WTC11 (cell line): ENCODE measurements at regions of chr2 and their contacts with region 1.

Region 1: GRCh38 chr2:75241696-75242095 is 42.4 kb upstream of the TACR1 start:
- DNase-seq: no peak
- ATAC-seq: peak; percentile 74
- H3K4me3 Mint-ChIP-seq: no peak overlapping the region
- H3K27ac Mint-ChIP-seq: no peak overlapping the region
- H3K4me1 Mint-ChIP-seq: no peaks in the 10 kb centered on the region
- H3K27me3 Mint-ChIP-seq: no peaks in the 10 kb centered on the region
- CTCF ChIP-seq: no peak

Region 2: GRCh38 chr2:74919827-74920226 is 321.9 kb before region 1 on chr2:
- CTCF ChIA-PET with region 1: interaction called, 11 read pairs
- POLR2A ChIA-PET with region 1: no interaction called
- DNase-seq: peak; percentile 89
- ATAC-seq: peak; percentile 94
- H3K4me3 Mint-ChIP-seq: peak overlapping the region; percentile 60
- H3K27ac Mint-ChIP-seq: no peak overlapping the region
- H3K4me1 Mint-ChIP-seq: no peaks in the 10 kb centered on the region
- H3K27me3 Mint-ChIP-seq: peaks cover 16% of the 10 kb centered on the region
- CTCF ChIP-seq: peak; percentile 89

Region 3: GRCh38 chr2:75098856-75099255 is 142.8 kb before region 1 on chr2:
- CTCF ChIA-PET with region 1: interaction called, 11 read pairs
- POLR2A ChIA-PET with region 1: no interaction called
- DNase-seq: peak; percentile 28
- ATAC-seq: peak; percentile 88
- H3K4me3 Mint-ChIP-seq: no peak overlapping the region
- H3K27ac Mint-ChIP-seq: no peak overlapping the region
- H3K4me1 Mint-ChIP-seq: peaks cover 6% of the 10 kb centered on the region
- H3K27me3 Mint-ChIP-seq: peaks cover 5% of the 10 kb centered on the region
- CTCF ChIP-seq: peak; percentile 45

Region 4: GRCh38 chr2:75146606-75147332 is 94.9 kb before region 1 on chr2:
- CTCF ChIA-PET with region 1: no interaction called
- POLR2A ChIA-PET with region 1: no interaction called
- DNase-seq: no peak
- ATAC-seq: no peak
- H3K4me3 Mint-ChIP-seq: no peak overlapping the region
- H3K27ac Mint-ChIP-seq: no peak overlapping the region
- H3K4me1 Mint-ChIP-seq: no peaks in the 10 kb centered on the region
- H3K27me3 Mint-ChIP-seq: no peaks in the 10 kb centered on the region
- CTCF ChIP-seq: no peak

Region 5: GRCh38 chr2:75157430-75157829 is 84.3 kb before region 1 on chr2:
- CTCF ChIA-PET with region 1: interaction called, 13 read pairs
- POLR2A ChIA-PET with region 1: no interaction called
- DNase-seq: no peak
- ATAC-seq: peak; percentile 54
- H3K4me3 Mint-ChIP-seq: no peak overlapping the region
- H3K27ac Mint-ChIP-seq: no peak overlapping the region
- H3K4me1 Mint-ChIP-seq: peaks cover 24% of the 10 kb centered on the region
- H3K27me3 Mint-ChIP-seq: no peaks in the 10 kb centered on the region
- CTCF ChIP-seq: no peak

Region 6: GRCh38 chr2:75199428-75200011 is 42.2 kb before region 1 on chr2 and contains the start of gene TACR1:
- CTCF ChIA-PET with region 1: interaction called, 15 read pairs
- POLR2A ChIA-PET with region 1: no interaction called
- DNase-seq: peak; percentile 63
- ATAC-seq: peak; percentile 31
- H3K4me3 Mint-ChIP-seq: peak within 1 kb of the TSS; percentile 84
- H3K27ac Mint-ChIP-seq: no peak within 1 kb of the TSS
- H3K4me1 Mint-ChIP-seq: peaks cover 26% of the 10 kb centered on the region
- H3K27me3 Mint-ChIP-seq: peaks cover 72% of the 10 kb centered on the region
- CTCF ChIP-seq: no peak
- total RNA-seq, gene TACR1: 0.13 to 0.23 TPM (median 0.18 TPM) in 3 replicates

Region 7: DNA sequence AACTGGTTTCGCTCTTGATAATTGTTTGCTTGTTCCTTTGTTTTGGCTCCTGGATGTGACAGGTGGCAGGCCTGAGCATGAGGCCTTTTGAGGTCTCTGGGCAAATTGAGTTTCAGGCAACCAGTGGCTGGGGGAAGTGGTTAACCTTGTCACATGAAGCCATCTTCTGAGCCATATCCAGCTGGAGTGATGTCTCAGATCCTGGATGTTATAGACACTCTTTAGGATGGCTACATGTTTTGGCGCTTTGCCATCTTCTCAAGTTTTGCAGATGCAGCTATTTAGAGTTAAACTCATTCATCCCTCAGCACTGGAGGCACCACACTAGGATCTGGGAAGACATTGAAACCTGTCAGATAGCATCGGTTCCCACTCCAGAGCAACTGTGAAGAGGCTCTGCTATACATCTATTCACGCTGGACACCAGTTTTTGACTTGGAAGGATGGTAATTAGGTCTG is 17.0 kb before region 1 on chr2:
- CTCF ChIA-PET with region 1: no interaction called
- POLR2A ChIA-PET with region 1: no interaction called
- DNase-seq: no peak
- ATAC-seq: no peak
- H3K4me3 Mint-ChIP-seq: no peak overlapping the region
- H3K27ac Mint-ChIP-seq: no peak overlapping the region
- H3K4me1 Mint-ChIP-seq: peaks cover 19% of the 10 kb centered on the region
- H3K27me3 Mint-ChIP-seq: no peaks in the 10 kb centered on the region
- CTCF ChIP-seq: no peak

Region 8: GRCh38 chr2:75416420-75417342 is 175.0 kb after region 1 on chr2:
- CTCF ChIA-PET with region 1: no interaction called
- POLR2A ChIA-PET with region 1: no interaction called
- DNase-seq: no peak
- ATAC-seq: peak; percentile 67
- H3K4me3 Mint-ChIP-seq: no peak overlapping the region
- H3K27ac Mint-ChIP-seq: no peak overlapping the region
- H3K4me1 Mint-ChIP-seq: peaks cover 11% of the 10 kb centered on the region
- H3K27me3 Mint-ChIP-seq: no peaks in the 10 kb centered on the region
- CTCF ChIP-seq: no peak